ENCODE measurements at regions of chr1 and their contacts with region 1.

Region 1: GRCh38 chr1:29202584-29203340 is 21.1 kb upstream of the SRSF4 start:
- DNase-seq: peak; percentile 97
- H3K4me3 Mint-ChIP-seq: no peak overlapping the region
- H3K27ac Mint-ChIP-seq: peak overlapping the region; percentile 34
- H3K4me1 Mint-ChIP-seq: peaks cover 15% of the 10 kb centered on the region
- H3K27me3 Mint-ChIP-seq: no peaks in the 10 kb centered on the region

Region 2: DNA sequence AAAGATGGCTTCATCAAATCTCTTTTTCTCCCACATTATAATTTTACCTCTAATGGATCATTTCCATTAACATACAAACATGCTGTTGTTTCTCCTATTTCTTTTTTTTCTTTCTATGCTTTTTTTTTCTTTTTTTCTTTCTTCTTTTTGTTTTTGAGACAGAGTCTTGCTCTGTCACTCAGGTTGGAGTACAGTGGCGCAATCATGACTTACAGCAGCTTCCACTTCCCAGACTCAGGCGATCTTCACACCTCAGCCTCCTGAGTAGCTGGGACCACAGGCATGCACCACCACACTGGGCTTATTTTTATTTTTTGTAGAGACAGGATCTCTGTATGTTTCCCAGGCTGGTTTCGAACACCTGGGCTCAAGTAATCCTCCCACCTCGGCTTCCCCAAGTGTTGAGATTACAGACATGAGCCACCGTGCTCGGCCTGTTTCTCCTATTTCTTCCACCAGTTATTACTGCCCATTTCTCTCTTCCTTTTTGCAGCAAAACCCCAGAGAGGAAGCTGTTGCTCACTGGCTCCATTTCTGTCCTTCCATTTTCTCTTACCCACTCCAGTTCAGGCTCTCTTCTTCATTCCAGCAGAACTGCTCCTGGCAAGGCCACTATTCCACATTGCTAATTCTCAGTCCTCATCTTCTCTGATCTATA is 422.9 kb before region 1 on chr1:
- intact Hi-C with region 1: loop called (anchors 2 kb)
- DNase-seq: no peak
- H3K4me3 Mint-ChIP-seq: no peak overlapping the region
- H3K27ac Mint-ChIP-seq: no peak overlapping the region
- H3K4me1 Mint-ChIP-seq: peaks cover 2% of the 10 kb centered on the region
- H3K27me3 Mint-ChIP-seq: peaks cover 13% of the 10 kb centered on the region

Region 3: GRCh38 chr1:29033829-29034466 is 168.8 kb before region 1 on chr1:
- intact Hi-C with region 1: loop called (anchors 2 kb)
- DNase-seq: peak; percentile 60
- H3K4me3 Mint-ChIP-seq: no peak overlapping the region
- H3K27ac Mint-ChIP-seq: no peak overlapping the region
- H3K4me1 Mint-ChIP-seq: no peaks in the 10 kb centered on the region
- H3K27me3 Mint-ChIP-seq: no peaks in the 10 kb centered on the region

Region 4: DNA sequence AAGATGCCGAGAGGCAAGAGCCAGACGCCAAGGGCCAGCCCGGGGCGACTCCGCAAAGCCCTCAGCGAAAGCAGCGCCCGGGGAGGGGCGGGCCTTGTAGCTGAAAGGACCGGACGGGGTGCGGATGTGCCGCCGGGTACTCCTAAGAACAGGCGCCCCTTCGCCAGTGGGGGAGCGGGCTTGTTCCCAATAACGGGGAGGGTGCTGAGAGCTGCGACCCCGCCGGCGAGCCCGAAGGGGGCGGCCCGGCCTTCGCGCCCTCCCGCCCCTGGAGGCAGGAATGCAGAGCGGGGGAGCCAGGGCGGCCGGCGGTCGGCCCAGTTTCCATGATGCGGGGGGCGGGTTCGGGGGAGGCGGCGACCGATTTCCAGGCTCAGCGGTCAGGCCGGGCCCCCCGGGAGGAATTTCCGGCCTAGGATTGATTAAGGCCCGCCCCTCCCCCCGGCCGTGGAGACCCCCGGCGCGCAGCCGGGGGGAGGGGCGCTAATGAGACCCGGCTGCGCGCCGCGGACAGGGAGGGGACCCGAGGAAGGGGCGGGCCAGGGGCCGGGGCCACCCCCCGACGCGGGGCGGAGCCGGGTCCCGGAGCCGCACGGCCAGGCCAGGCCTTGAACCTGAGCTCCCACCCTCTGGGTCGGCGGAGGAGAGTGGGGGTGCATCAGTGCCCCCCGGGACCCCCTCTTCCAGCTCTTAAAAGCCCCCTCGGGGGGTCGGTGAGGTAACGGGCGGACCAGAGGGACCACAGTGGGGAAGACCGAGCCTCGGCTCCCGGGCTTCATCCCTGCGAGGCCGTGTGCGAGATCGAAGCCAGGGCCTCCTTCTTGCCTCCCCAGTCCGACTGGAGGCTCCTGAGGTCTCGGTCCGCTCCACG is 78.2 kb before region 1 on chr1:
- intact Hi-C with region 1: loop called (anchors 5 kb)
- DNase-seq: peak; percentile 88
- H3K4me3 Mint-ChIP-seq: peak overlapping the region; percentile 82
- H3K27ac Mint-ChIP-seq: peak overlapping the region; percentile 29
- H3K4me1 Mint-ChIP-seq: peaks cover 6% of the 10 kb centered on the region
- H3K27me3 Mint-ChIP-seq: peaks cover 17% of the 10 kb centered on the region

Measured in activated CD4-positive, alpha-beta T cell treated with anti-CD3 and anti-CD28 coated beads, Interleukin-2, amount 10 ng/mL, durations not matched to agents 24 days and 14 days (primary cell).